A549 (cell line): ENCODE measurements at regions of chr17 and their contacts with region 1.

Region 1: GRCh38 chr17:66165513-66166123 is 26.3 kb downstream of the CEP112 start:
- DNase-seq: peak; percentile 65 to 72
- ATAC-seq: peak; percentile 68 to 81; a peak in 4 of 6 replicates
- H3K4me3 ChIP-seq: no peak overlapping the region
- H3K27ac ChIP-seq: no peak overlapping the region
- H3K4me1 ChIP-seq: no peaks in the 10 kb centered on the region
- CTCF ChIP-seq: peak; percentile 96
- EP300 ChIP-seq: no peak
- POLR2A ChIP-seq: no peak
- RAD21 ChIP-seq: peak; percentile 95 to 98

Region 2: DNA sequence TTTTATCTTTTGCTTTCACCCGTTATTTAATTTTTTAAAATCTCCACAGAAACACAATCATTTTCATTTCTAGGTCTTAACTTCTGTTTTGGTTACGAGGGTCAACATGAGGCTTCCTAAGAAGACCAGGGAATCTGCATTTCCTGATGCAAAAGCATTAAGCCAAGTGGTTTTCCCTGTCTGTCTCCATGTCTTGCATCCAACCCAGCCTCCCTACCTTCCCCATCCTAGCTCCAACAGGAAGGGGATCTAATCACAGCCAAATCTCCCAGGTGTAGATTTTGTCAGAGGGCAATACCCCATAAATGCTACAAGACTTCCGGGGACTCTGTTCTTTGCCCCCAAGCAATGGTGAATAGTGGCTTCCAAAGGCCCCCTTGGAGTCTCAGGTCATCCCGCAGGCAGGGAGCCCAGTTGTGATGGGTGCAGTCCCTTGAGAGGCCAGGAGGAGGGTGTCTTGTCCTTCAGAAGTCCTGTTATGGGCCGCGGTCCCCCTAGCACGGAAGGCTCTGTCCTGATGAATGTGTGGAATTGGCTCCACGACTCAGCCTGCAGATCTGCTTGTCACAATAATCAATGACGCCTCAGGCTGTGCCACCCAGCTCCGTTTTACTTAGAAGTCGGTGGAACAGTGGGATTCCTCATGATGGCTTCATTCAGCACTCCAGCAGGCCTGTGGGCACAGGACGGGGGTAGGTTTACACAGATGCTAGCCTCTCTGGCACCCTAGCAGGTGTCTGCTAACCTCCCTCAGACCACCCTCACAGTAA is 887.4 kb before region 1 on chr17:
- CTCF ChIA-PET with region 1: interaction called, 51 read pairs
- POLR2A ChIA-PET with region 1: no interaction called
- DNase-seq: peak; percentile 73 to 87
- ATAC-seq: peak; percentile 97 to 99
- H3K4me3 ChIP-seq: no peak overlapping the region
- H3K27ac ChIP-seq: no peak overlapping the region
- H3K4me1 ChIP-seq: no peaks in the 10 kb centered on the region
- CTCF ChIP-seq: peak; percentile 71
- EP300 ChIP-seq: no peak
- POLR2A ChIP-seq: peak; percentile 13; the same call in 1 of the 2 replicates
- RAD21 ChIP-seq: peak; percentile 90 to 92

Region 3: DNA sequence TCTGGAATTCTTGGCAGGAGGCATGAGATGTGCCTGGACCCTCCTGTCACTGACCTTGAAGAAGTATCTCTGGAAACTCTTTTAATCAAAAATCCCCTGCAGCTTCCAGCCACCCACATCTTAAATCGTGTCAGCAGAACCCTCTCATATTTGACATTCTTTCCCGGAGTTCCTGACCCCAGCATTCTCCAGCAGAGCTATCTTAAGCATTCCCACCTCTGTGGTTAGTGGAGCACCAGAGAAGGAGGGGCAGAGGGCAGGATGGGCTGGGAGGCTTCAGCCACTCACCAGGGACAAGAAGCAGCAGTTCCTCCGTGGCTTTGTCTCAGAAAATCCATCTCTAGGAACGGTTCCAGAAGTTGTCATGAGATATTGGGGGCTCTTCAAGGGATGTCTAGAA is 878.6 kb before region 1 on chr17:
- CTCF ChIA-PET with region 1: interaction called, 101 read pairs
- POLR2A ChIA-PET with region 1: no interaction called
- DNase-seq: no peak
- ATAC-seq: peak in 1 of 2 experiments; percentile 24; a peak in 1 of 6 replicates
- H3K4me3 ChIP-seq: no peak overlapping the region
- H3K27ac ChIP-seq: no peak overlapping the region
- H3K4me1 ChIP-seq: no peaks in the 10 kb centered on the region
- CTCF ChIP-seq: no peak
- EP300 ChIP-seq: no peak
- POLR2A ChIP-seq: no peak
- RAD21 ChIP-seq: no peak

Region 4: DNA sequence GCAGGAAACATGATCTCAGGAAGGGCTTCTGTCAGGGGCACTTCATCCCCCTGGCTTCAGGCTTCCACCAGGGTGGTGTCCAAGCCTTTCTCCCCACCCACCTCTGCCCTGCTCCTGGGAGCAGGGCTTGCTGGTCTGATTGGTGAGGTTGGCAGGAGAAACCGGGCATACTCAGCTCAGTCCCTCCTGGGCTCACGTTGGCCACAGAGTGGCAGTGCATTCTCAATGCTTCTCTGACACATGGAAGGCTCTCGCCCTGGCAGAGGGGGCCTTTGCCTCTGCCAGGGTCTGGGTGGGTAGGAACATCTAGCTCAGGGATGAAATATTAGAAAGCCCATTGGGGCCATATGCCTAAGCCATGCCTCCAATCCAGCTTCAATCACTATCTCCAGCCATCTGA is 747.0 kb before region 1 on chr17:
- CTCF ChIA-PET with region 1: interaction called, 10 read pairs
- POLR2A ChIA-PET with region 1: no interaction called
- DNase-seq: no peak
- ATAC-seq: peak; percentile 73 to 77; a peak in 5 of 6 replicates
- H3K4me3 ChIP-seq: no peak overlapping the region
- H3K27ac ChIP-seq: no peak overlapping the region
- H3K4me1 ChIP-seq: no peaks in the 10 kb centered on the region
- CTCF ChIP-seq: peak; percentile 28
- EP300 ChIP-seq: no peak
- POLR2A ChIP-seq: no peak
- RAD21 ChIP-seq: peak; percentile 31 to 47; a peak in 3 of 5 replicates

Region 5: GRCh38 chr17:66198242-66198641 is 32.6 kb after region 1 on chr17:
- CTCF ChIA-PET with region 1: no interaction called
- POLR2A ChIA-PET with region 1: no interaction called
- DNase-seq: no peak
- ATAC-seq: no peak
- H3K4me3 ChIP-seq: no peak overlapping the region
- H3K27ac ChIP-seq: no peak overlapping the region
- H3K4me1 ChIP-seq: peaks cover 5% of the 10 kb centered on the region
- CTCF ChIP-seq: no peak
- EP300 ChIP-seq: no peak
- POLR2A ChIP-seq: no peak
- RAD21 ChIP-seq: no peak

Region 6: GRCh38 chr17:66214884-66215528 is 49.4 kb after region 1 on chr17:
- CTCF ChIA-PET with region 1: no interaction called
- POLR2A ChIA-PET with region 1: no interaction called
- DNase-seq: no peak
- ATAC-seq: no peak
- H3K4me3 ChIP-seq: no peak overlapping the region
- H3K27ac ChIP-seq: no peak overlapping the region
- H3K4me1 ChIP-seq: no peaks in the 10 kb centered on the region
- CTCF ChIP-seq: no peak
- EP300 ChIP-seq: no peak
- POLR2A ChIP-seq: no peak
- RAD21 ChIP-seq: no peak